ENCODE measurements at regions of chr6 and their contacts with region 1.

Region 1: DNA sequence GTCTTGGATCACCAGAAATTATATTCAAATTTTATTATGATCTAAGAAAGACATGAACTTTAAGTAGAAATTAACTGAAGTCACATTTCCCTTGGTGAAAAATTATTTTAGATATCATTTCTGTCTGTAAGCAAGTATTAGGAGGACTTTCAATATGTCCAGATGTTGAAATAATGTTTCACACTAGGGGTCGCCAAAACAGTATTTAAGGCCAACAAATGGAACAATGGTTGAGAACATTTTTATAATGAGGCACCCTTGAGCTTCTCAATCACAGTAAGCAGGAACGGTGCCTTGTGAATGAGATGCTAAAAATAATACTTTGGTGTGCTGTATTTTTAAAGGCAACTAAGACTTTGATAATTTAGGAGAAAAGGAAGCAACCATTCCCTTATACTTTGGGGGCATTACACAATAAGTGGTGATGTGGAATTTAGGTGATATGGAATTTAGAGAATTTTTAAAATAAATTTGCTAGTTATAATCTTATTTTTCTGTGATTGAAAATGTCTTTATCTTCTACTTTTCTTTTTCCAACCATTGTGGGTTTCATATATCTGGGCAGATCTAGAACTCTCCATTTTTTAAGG is 9.6 kb upstream of the SF3B5 start:
- DNase-seq: no peak
- ATAC-seq: peak; percentile 97

Region 2: GRCh38 chr6:143941852-143942627 is 163.0 kb before region 1 on chr6:
- intact Hi-C with region 1: no loop called
- DNase-seq: peak; percentile 65
- ATAC-seq: no peak

Region 3: DNA sequence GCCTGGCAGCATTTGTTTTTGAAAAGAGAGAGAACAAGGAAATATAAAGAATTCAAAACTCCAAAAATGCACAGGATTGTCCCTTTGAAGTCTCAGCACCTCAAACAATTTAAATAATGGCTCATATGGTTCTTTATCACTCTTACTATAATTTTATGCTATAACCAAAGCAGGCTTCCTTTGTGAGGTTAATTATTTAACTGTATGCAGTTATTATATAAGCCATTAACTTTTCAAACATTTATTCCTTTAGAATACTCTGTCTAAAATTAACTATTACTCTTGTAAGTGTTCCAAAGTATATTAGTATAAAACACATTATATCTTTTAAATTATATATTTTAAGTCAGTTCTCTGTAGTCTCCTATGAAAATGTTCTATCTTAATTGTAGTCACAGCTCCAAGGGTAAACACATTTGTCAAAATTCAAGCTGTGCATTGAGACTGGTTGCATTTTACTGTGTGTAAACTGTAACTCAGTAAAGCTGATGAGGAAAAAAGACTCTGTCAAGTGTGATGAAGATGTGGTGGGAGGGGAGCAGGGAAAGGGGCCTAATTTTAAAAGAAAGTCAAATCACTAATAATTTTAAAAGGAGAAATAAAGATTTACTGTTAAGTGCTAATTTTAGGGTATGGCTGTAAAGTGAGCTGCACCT is 76.9 kb before region 1 on chr6:
- intact Hi-C with region 1: no loop called
- DNase-seq: no peak
- ATAC-seq: no peak

Region 4: DNA sequence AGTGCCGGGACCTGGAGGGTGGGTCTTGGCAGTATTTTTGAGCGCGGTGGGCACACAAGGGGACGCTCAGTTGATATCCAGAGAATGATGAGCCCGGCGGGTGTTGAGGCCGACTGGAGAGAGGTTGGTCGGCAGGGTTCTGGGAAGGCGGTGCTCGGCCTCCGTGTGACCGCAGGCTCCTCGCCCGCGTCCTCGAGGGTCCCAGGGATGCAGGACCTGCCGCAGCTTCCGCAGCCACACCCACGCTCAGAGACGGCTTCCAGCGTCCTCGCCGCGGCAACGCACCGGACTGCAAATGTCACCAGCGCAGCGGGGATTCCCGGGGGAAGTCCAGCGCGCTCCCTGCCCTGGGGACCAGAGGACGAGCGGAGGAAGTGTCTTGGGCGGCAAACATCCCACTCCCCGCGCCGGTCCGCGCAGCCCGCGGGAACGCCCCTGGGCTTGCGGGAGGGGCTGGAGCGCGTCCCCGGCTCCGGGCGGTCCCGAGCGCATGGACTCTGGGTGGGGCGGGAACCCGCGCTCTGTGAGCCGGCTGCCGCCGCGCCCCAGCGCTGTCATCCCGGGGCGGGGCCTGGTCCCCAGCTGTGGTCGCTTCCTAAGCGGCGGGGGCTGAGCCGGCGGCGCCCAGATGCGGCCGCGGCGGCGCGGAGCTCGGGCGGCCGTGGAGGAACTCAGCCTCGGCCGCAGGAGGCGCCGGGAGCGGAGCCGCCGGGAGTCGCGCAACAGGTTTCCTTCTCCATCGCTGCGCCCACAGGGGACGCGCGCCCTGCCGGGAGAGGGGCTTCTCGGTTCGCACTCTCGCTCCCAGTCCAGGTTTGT is 45.1 kb after region 1 on chr6 and contains the start of gene STX11:
- intact Hi-C with region 1: loop called (anchors 5 kb)
- DNase-seq: peak; percentile 89
- ATAC-seq: peak; percentile 96
- total RNA-seq, gene STX11: 8.9 TPM

Region 5: DNA sequence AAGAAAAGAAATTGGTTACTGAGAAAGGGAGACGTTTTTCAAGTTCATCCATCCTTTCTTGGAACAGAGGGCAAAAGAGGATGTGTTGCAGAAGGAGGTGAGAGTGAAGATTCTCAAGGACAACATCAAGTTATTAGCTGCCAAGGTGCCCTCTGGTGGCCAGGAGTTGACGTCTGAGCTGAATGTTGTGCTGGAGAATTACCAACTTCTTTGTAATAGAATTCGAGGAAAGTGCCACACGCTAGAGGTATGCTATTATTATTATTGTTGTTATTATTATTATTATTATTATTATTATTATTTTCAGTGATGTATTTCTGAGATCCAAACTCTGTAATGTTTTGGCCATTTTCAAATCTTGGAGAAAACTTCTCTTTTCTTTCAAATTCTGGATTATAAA is 377.1 kb after region 1 on chr6:
- intact Hi-C with region 1: loop called (anchors 5 kb)
- DNase-seq: peak; percentile 83
- ATAC-seq: peak; percentile 39

Measured in Right ventricle myocardium superior (tissue), 1 donor.